A549 (cell line): ENCODE measurements at regions of chr9 and their contacts with region 1.

Region 1: GRCh38 chr9:133048569-133048968 is 13.2 kb upstream of the CEL start:
- DNase-seq: peak; percentile 35 to 46
- ATAC-seq: peak; percentile 68 to 89; a peak in 5 of 6 replicates
- H3K4me3 ChIP-seq: no peak overlapping the region
- H3K27ac ChIP-seq: no peak overlapping the region
- H3K4me1 ChIP-seq: no peaks in the 10 kb centered on the region
- CTCF ChIP-seq: peak; percentile 40
- EP300 ChIP-seq: no peak
- POLR2A ChIP-seq: no peak
- RAD21 ChIP-seq: peak; percentile 16 to 49; a peak in 2 of 5 replicates

Region 2: GRCh38 chr9:132994410-132995120 is 54.0 kb before region 1 on chr9:
- CTCF ChIA-PET with region 1: no interaction called
- POLR2A ChIA-PET with region 1: no interaction called
- DNase-seq: peak in 1 of 2 experiments; percentile 29
- ATAC-seq: peak in 1 of 2 experiments; percentile 29; a peak in 2 of 6 replicates
- H3K4me3 ChIP-seq: no peak overlapping the region
- H3K27ac ChIP-seq: no peak overlapping the region
- H3K4me1 ChIP-seq: no peaks in the 10 kb centered on the region
- CTCF ChIP-seq: no peak
- EP300 ChIP-seq: no peak
- POLR2A ChIP-seq: no peak
- RAD21 ChIP-seq: no peak

Region 3: DNA sequence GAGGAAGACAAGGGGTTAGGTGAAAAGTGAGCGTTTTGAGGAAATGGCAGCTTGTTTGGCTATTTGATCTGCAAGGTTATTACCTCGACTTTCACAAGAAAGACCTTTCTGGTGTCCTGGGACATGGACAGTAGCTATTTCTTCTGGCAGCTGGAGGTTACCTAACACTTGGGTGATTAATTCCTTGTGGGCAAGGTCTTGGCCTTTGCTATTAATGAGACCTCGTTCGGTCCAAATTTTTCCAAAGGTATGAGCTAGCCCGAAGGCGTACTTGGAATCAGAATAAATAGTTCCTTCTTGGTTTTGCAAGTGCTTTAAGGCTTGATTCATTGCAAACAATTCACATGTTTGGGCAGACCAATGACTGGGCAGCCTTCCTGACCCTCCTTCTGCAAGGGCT is 12.9 kb before region 1 on chr9:
- CTCF ChIA-PET with region 1: interaction called, 10 read pairs
- POLR2A ChIA-PET with region 1: interaction called, 7 read pairs
- DNase-seq: no peak
- ATAC-seq: no peak
- H3K4me3 ChIP-seq: no peak overlapping the region
- H3K27ac ChIP-seq: no peak overlapping the region
- H3K4me1 ChIP-seq: peaks cover 9% of the 10 kb centered on the region
- CTCF ChIP-seq: no peak
- EP300 ChIP-seq: no peak
- POLR2A ChIP-seq: no peak
- RAD21 ChIP-seq: no peak

Region 4: GRCh38 chr9:133073086-133074014 is 24.8 kb after region 1 on chr9:
- CTCF ChIA-PET with region 1: no interaction called
- POLR2A ChIA-PET with region 1: no interaction called
- DNase-seq: no peak
- ATAC-seq: no peak
- H3K4me3 ChIP-seq: no peak overlapping the region
- H3K27ac ChIP-seq: no peak overlapping the region
- H3K4me1 ChIP-seq: no peaks in the 10 kb centered on the region
- CTCF ChIP-seq: no peak
- EP300 ChIP-seq: no peak
- POLR2A ChIP-seq: no peak
- RAD21 ChIP-seq: no peak

Region 5: DNA sequence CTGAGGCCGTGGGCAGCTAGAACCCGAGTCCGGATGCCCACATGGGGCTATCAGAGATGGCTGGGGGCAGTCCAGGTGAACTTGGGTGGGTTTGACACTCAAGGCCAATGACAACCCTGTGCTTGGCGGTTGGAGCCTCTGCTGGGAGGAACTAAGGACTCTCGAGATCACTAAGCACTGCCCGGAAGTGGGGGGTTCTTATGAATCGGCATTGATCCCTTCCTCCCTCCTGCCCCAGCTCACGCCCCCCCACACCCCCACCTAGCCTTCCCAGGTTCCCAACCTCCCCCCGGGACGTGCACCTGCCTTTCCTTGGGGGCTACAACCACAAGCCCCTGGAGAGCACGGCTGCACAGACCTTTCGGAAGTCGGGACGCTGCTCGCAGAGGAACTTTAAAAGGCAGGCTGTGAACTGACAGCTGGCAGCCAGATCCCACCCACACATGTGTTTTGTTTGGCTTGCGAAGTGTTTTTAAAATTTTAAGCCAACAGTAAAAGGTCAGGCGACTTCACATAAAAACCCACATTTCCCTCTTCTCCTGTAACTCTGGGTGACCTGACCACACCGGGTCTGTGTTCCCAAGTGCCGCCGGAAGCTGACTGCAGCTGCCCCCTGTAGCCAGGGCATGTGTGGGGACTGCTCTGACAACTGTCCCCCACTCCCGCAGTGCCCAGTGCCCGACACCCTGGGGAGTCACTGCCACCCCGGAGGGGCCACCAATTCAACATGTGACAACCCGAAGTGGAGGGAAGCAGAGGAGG is 77.6 kb after region 1 on chr9:
- CTCF ChIA-PET with region 1: no interaction called
- POLR2A ChIA-PET with region 1: no interaction called
- DNase-seq: no peak
- ATAC-seq: no peak
- H3K4me3 ChIP-seq: no peak overlapping the region
- H3K27ac ChIP-seq: no peak overlapping the region
- H3K4me1 ChIP-seq: peaks cover 17% of the 10 kb centered on the region
- CTCF ChIP-seq: no peak
- EP300 ChIP-seq: no peak
- POLR2A ChIP-seq: no peak
- RAD21 ChIP-seq: no peak